A673 (cell line): ENCODE measurements at regions of chr17 and their contacts with region 1.

Region 1: GRCh38 chr17:37818689-37819088 is 73.8 kb upstream of the HNF1B start:
- DNase-seq: no peak
- H3K4me3 ChIP-seq: no peak overlapping the region
- H3K27ac ChIP-seq: no peak overlapping the region
- H3K4me1 ChIP-seq: no peaks in the 10 kb centered on the region
- H3K27me3 ChIP-seq: no peaks in the 10 kb centered on the region
- CTCF ChIP-seq: no peak

Region 2: GRCh38 chr17:36629252-36629847 is 1189.3 kb before region 1 on chr17:
- CTCF ChIA-PET with region 1: no interaction called
- POLR2A ChIA-PET with region 1: no interaction called
- intact Hi-C with region 1: loop called (anchors 10 kb)
- DNase-seq: peak; percentile 48
- H3K4me3 ChIP-seq: no peak overlapping the region
- H3K27ac ChIP-seq: no peak overlapping the region
- H3K4me1 ChIP-seq: no peaks in the 10 kb centered on the region
- H3K27me3 ChIP-seq: no peaks in the 10 kb centered on the region
- CTCF ChIP-seq: peak; percentile 77

Region 3: GRCh38 chr17:37373530-37374159 is 445.0 kb before region 1 on chr17:
- CTCF ChIA-PET with region 1: interaction called, 4 read pairs
- POLR2A ChIA-PET with region 1: no interaction called
- intact Hi-C with region 1: loop called (anchors 10 kb)
- DNase-seq: peak; percentile 72
- H3K4me3 ChIP-seq: no peak overlapping the region
- H3K27ac ChIP-seq: no peak overlapping the region
- H3K4me1 ChIP-seq: no peaks in the 10 kb centered on the region
- H3K27me3 ChIP-seq: no peaks in the 10 kb centered on the region
- CTCF ChIP-seq: peak; percentile 89

Region 4: DNA sequence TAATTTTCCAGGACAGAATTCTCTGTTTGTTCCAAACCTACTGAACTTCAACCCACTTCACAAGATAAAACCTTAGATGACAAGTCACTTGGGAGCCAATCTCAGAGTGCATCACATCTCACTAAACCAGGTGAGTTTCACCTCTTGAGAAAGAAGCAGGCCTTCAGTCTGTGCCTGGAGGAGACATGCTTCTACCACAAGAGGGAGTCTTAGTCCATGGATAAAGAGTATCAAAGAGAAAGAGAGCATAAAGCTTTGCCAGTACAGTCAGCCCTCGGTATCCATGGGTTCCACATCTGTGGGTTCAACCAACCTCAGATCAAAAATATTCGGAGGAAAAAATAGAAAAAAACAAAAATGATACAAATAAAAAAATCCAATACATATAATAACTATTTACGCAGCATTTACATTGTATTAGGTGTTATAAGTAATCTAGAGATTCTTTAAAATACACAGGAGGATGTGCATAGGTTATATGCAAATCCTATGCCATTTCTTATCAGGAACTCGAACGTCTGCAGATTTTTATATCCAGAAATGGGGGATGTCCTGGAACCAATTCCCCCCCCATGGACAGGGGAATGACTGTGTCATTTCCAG is 291.3 kb before region 1 on chr17:
- CTCF ChIA-PET with region 1: interaction called, 3 read pairs
- POLR2A ChIA-PET with region 1: no interaction called
- intact Hi-C with region 1: loop called (anchors 10 kb)
- DNase-seq: peak; percentile 39
- H3K4me3 ChIP-seq: no peak overlapping the region
- H3K27ac ChIP-seq: no peak overlapping the region
- H3K4me1 ChIP-seq: no peaks in the 10 kb centered on the region
- H3K27me3 ChIP-seq: no peaks in the 10 kb centered on the region
- CTCF ChIP-seq: peak; percentile 59

Region 5: DNA sequence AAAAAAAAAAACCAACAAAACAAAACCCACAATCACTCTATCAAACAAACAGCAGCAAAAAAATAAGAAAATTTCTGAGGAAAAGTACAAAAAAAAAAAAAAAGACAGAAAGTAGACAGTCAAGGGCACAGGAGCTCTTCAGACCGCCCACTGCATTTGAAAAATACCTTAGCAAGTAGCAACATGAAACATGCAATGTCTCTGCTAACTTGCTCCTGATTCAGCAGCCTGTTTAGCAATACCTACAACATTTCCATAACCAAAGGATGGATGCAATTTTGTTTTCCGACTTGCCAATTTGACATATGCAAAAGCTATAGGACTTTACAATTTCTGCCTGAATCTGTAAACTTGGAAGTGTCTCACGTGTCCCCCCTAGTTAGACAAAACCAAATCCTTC is 266.9 kb before region 1 on chr17:
- CTCF ChIA-PET with region 1: no interaction called
- POLR2A ChIA-PET with region 1: no interaction called
- intact Hi-C with region 1: no loop called
- DNase-seq: no peak
- H3K4me3 ChIP-seq: no peak overlapping the region
- H3K27ac ChIP-seq: no peak overlapping the region
- H3K4me1 ChIP-seq: no peaks in the 10 kb centered on the region
- H3K27me3 ChIP-seq: no peaks in the 10 kb centered on the region
- CTCF ChIP-seq: no peak